Lower leg skin (tissue), 4 donors: ENCODE measurements at regions of chr4 and their contacts with region 1.

Region 1: GRCh38 chr4:79827283-79827682 is 245.7 kb downstream of the ANTXR2 start:
- DNase-seq: no peak
- H3K4me3 ChIP-seq: no peak overlapping the region
- CTCF ChIP-seq: no peak
- POLR2A ChIP-seq: no peak

Region 2: GRCh38 chr4:79273915-79274314 is 553.4 kb before region 1 on chr4:
- intact Hi-C with region 1: no loop called
- DNase-seq: no peak
- H3K4me3 ChIP-seq: no peak overlapping the region
- CTCF ChIP-seq: no peak
- POLR2A ChIP-seq: no peak

Region 3: GRCh38 chr4:79798047-79798446 is 29.2 kb before region 1 on chr4:
- intact Hi-C with region 1: no loop called
- DNase-seq: no peak
- H3K4me3 ChIP-seq: no peak overlapping the region
- CTCF ChIP-seq: no peak
- POLR2A ChIP-seq: no peak

Region 4: GRCh38 chr4:79842162-79842561 is 14.9 kb after region 1 on chr4:
- intact Hi-C with region 1: loop called (anchors 2 kb)
- DNase-seq: no peak
- H3K4me3 ChIP-seq: no peak overlapping the region
- CTCF ChIP-seq: no peak
- POLR2A ChIP-seq: no peak

Region 5: GRCh38 chr4:79947386-79947785 is 120.1 kb after region 1 on chr4:
- intact Hi-C with region 1: no loop called
- DNase-seq: no peak
- H3K4me3 ChIP-seq: no peak overlapping the region
- CTCF ChIP-seq: no peak
- POLR2A ChIP-seq: no peak